CD4-positive, alpha-beta memory T cell (primary cell): ENCODE measurements at regions of chr6 and their contacts with region 1.

Region 1: GRCh38 chr6:31729515-31729978 is 448 bp upstream of the DDAH2 start:
- DNase-seq: peak; percentile 72 to 83 (median 77)
- H3K4me3 ChIP-seq: peak overlapping the region; percentile 87 to 96
- H3K4me3 Mint-ChIP-seq: peak overlapping the region; percentile 94 to 98 (median 97)
- H3K27ac ChIP-seq: peak overlapping the region; percentile 68
- H3K27ac Mint-ChIP-seq: peak overlapping the region; percentile 89 to 97 (median 94)
- H3K4me1 ChIP-seq: peaks cover 65% of the 10 kb centered on the region
- H3K4me1 Mint-ChIP-seq: peaks cover 32 to 70% (median 47%) of the 10 kb centered on the region in 4 donors
- H3K27me3 ChIP-seq: no peaks in the 10 kb centered on the region
- H3K27me3 Mint-ChIP-seq: no peaks in the 10 kb centered on the region

Region 2: DNA sequence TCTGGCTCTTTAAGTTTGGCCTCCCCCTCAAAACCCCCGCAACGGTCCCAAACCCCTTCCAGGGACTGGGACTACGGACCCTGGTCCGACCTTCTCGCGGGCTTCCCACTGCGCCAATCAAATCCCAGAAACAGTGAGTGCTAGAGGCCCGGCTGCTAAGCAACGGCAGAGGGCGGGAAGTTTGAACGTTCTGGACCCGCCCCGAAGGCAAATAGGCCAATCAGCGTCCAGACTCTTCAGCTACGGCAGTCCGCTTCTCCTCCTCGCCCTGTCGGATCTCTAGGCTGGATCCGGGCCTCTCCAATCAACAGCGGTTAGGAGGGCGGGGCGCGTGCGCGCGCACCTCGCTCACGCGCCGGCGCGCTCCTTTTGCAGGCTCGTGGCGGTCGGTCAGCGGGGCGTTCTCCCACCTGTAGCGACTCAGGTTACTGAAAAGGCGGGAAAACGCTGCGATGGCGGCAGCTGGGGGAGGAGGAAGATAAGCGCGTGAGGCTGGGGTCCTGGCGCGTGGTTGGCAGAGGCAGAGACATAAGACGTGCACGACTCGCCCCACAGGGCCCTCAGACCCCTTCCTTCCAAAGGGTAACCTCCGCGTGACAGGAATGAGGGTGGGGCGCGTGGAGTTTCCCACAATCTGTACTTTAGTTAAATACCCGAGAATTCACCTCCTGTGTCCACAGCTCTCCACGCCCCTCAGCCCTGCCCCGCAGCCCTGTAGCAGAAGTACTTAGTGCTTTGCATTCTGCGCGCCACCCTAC is 10.3 kb after region 1 on chr6 and contains the start of gene MSH5:
- CTCF ChIA-PET with region 1: interaction called, 24 read pairs
- POLR2A ChIA-PET with region 1: interaction called, 77 read pairs
- intact Hi-C with region 1: loop called (anchors 1 kb)
- DNase-seq: peak; percentile 92 to 97 (median 94)
- H3K4me3 ChIP-seq: peak within 1 kb of the TSS; percentile 82
- H3K4me3 Mint-ChIP-seq: peak within 1 kb of the TSS; percentile 89 to 99 (median 98)
- H3K27ac ChIP-seq: peak within 1 kb of the TSS; percentile 64
- H3K27ac Mint-ChIP-seq: peak within 1 kb of the TSS; percentile 94 to 97 (median 95)
- H3K4me1 ChIP-seq: peaks cover 42% of the 10 kb centered on the region
- H3K4me1 Mint-ChIP-seq: peaks cover 33 to 64% (median 51%) of the 10 kb centered on the region in 4 donors
- H3K27me3 ChIP-seq: no peaks in the 10 kb centered on the region
- H3K27me3 Mint-ChIP-seq: no peaks in the 10 kb centered on the region
- total RNA-seq, gene MSH5: 11.4 to 12.1 TPM

Region 3: GRCh38 chr6:31795616-31796298 is 66.2 kb after region 1 on chr6 and contains the start of gene VARS1:
- CTCF ChIA-PET with region 1: interaction called, 14 read pairs
- POLR2A ChIA-PET with region 1: interaction called, 42 read pairs
- intact Hi-C with region 1: no loop called
- DNase-seq: peak; percentile 83 to 90 (median 84)
- H3K4me3 ChIP-seq: peak within 1 kb of the TSS; percentile 72 to 96
- H3K4me3 Mint-ChIP-seq: peak within 1 kb of the TSS; percentile 94 to 99 (median 97)
- H3K27ac ChIP-seq: peak within 1 kb of the TSS; percentile 95
- H3K27ac Mint-ChIP-seq: peak within 1 kb of the TSS; percentile 63 to 99 (median 98)
- H3K4me1 ChIP-seq: peaks cover 55% of the 10 kb centered on the region
- H3K4me1 Mint-ChIP-seq: peaks cover 22 to 64% (median 37%) of the 10 kb centered on the region in 4 donors
- H3K27me3 ChIP-seq: no peaks in the 10 kb centered on the region
- H3K27me3 Mint-ChIP-seq: no peaks in the 10 kb centered on the region
- total RNA-seq, gene VARS1: 39.6 to 46.8 TPM

Region 4: GRCh38 chr6:31815025-31815838 is 85.7 kb after region 1 on chr6 and contains the starts of genes HSPA1A and HSPA1L:
- CTCF ChIA-PET with region 1: interaction called, 21 read pairs
- POLR2A ChIA-PET with region 1: interaction called, 76 read pairs
- intact Hi-C with region 1: loop called (anchors 2 kb)
- DNase-seq: peak; percentile 38 to 69 (median 42)
- H3K4me3 ChIP-seq: peak within 1 kb of the TSS; percentile 81 to 97
- H3K4me3 Mint-ChIP-seq: peak within 1 kb of the TSS; percentile 91 to 96 (median 94)
- H3K27ac ChIP-seq: peak within 1 kb of the TSS; percentile 82
- H3K27ac Mint-ChIP-seq: peak within 1 kb of the TSS; percentile 88 to 95 (median 92)
- H3K4me1 ChIP-seq: peaks cover 50% of the 10 kb centered on the region
- H3K4me1 Mint-ChIP-seq: peaks cover 31 to 66% (median 46%) of the 10 kb centered on the region in 4 donors
- H3K27me3 ChIP-seq: no peaks in the 10 kb centered on the region
- H3K27me3 Mint-ChIP-seq: no peaks in the 10 kb centered on the region
- total RNA-seq, gene HSPA1A: 69.9 to 71.5 TPM
- total RNA-seq, gene HSPA1L: 8.2 to 8.3 TPM

Region 5: GRCh38 chr6:31862344-31863227 is 133.0 kb after region 1 on chr6 and contains the start of gene NEU1:
- CTCF ChIA-PET with region 1: interaction called, 5 read pairs
- POLR2A ChIA-PET with region 1: interaction called, 16 read pairs
- intact Hi-C with region 1: loop called (anchors 1 kb)
- DNase-seq: peak; percentile 97 to 100 (median 100)
- H3K4me3 ChIP-seq: peak within 1 kb of the TSS; percentile 88 to 95
- H3K4me3 Mint-ChIP-seq: peak within 1 kb of the TSS; percentile 87 to 96 (median 94)
- H3K27ac ChIP-seq: peak within 1 kb of the TSS; percentile 90
- H3K27ac Mint-ChIP-seq: peak within 1 kb of the TSS; percentile 94 to 98 (median 97)
- H3K4me1 ChIP-seq: peaks cover 16% of the 10 kb centered on the region
- H3K4me1 Mint-ChIP-seq: peaks cover 14 to 33% (median 23%) of the 10 kb centered on the region in 4 donors
- H3K27me3 ChIP-seq: no peaks in the 10 kb centered on the region
- H3K27me3 Mint-ChIP-seq: peaks cover 0 to 2% of the 10 kb centered on the region in 2 donors
- total RNA-seq, gene NEU1: 19.6 to 21.1 TPM